ENCODE measurements at regions of chr6 and their contacts with region 1.

Region 1: DNA sequence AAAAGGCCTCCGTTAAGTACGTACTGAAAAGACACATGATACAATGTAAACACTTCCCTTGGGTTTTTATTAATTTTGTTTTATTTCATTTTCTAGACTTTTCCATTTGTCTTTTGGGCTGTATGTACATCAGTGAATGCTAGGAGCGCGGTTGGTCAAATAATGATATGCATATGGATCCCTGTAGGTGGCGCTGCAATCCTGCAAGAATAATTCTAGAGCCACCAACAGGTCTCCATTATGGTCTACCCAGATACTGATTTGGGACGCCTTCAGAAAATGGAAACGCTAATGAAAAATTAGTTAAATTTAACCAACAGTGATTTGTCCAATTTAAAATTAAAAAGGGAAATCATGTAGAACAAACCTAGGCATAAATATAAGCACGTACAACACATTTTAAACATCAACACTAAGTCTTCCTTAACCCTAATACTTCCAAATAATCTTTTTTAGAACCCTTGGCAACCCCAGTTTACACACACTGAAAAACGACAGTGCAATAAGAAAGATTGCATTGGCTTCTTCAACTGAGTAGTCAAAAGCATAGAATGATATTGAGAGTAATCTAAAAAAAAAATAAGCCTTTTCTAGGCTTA is 433.5 kb downstream of the RFPL4B start:
- DNase-seq: peak; percentile 84
- H3K4me3 ChIP-seq: no peak overlapping the region
- H3K27ac ChIP-seq: no peak overlapping the region
- H3K4me1 ChIP-seq: no peaks in the 10 kb centered on the region
- H3K27me3 ChIP-seq: no peaks in the 10 kb centered on the region
- CTCF ChIP-seq: peak; percentile 61 to 81 (median 75)
- EP300 ChIP-seq: no peak
- POLR2A ChIP-seq: no peak

Region 2: GRCh38 chr6:112839525-112839961 is 58.9 kb after region 1 on chr6:
- intact Hi-C with region 1: no loop called
- DNase-seq: no peak
- H3K4me3 ChIP-seq: no peak overlapping the region
- H3K27ac ChIP-seq: no peak overlapping the region
- H3K4me1 ChIP-seq: no peaks in the 10 kb centered on the region
- H3K27me3 ChIP-seq: no peaks in the 10 kb centered on the region
- CTCF ChIP-seq: no peak
- EP300 ChIP-seq: no peak
- POLR2A ChIP-seq: no peak

Region 3: GRCh38 chr6:112851146-112851545 is 70.5 kb after region 1 on chr6:
- intact Hi-C with region 1: no loop called
- DNase-seq: no peak
- H3K4me3 ChIP-seq: no peak overlapping the region
- H3K27ac ChIP-seq: no peak overlapping the region
- H3K4me1 ChIP-seq: no peaks in the 10 kb centered on the region
- H3K27me3 ChIP-seq: no peaks in the 10 kb centered on the region
- CTCF ChIP-seq: no peak
- EP300 ChIP-seq: no peak
- POLR2A ChIP-seq: no peak

Region 4: GRCh38 chr6:112865120-112865519 is 84.5 kb after region 1 on chr6:
- intact Hi-C with region 1: no loop called
- DNase-seq: no peak
- H3K4me3 ChIP-seq: no peak overlapping the region
- H3K27ac ChIP-seq: no peak overlapping the region
- H3K4me1 ChIP-seq: no peaks in the 10 kb centered on the region
- H3K27me3 ChIP-seq: no peaks in the 10 kb centered on the region
- CTCF ChIP-seq: no peak
- EP300 ChIP-seq: no peak
- POLR2A ChIP-seq: no peak

Region 5: DNA sequence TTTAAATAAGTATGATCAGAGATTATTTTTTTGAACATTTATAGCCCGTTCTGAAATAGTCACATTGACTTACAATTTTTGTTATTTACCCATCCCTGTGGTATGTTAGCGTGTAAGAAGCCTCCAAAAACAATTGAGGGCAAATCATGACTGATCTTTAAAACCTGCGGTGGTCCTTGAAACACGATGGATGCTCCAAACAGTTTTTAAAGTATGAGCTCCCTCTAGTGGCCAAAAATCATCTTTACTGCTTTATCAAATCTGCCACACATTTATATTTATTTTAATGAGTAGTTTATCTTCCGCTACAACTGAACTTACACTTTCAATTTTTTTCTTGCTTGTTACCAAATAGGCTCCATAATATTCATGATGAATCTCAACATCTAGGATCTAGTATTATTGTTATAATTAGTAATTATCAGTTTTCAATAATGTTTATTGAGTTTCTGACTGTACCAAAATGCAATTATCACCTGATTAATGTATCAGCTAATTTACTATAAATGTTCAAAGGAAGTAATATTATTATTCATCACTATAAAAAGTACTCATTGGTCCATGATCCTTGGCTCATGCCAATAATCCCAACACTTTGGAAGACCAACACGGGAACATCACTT is 1128.7 kb after region 1 on chr6:
- intact Hi-C with region 1: loop called (anchors 2 kb)
- DNase-seq: no peak
- H3K4me3 ChIP-seq: no peak overlapping the region
- H3K27ac ChIP-seq: no peak overlapping the region
- H3K4me1 ChIP-seq: peaks cover 0 to 11% (median 3%) of the 10 kb centered on the region in 4 donors
- H3K27me3 ChIP-seq: no peaks in the 10 kb centered on the region
- CTCF ChIP-seq: peak; percentile 23 to 75 (median 60)
- EP300 ChIP-seq: no peak
- POLR2A ChIP-seq: no peak